Aorta (tissue), 5 donors: ENCODE measurements at regions of chr1 and their contacts with region 1.

Region 1: DNA sequence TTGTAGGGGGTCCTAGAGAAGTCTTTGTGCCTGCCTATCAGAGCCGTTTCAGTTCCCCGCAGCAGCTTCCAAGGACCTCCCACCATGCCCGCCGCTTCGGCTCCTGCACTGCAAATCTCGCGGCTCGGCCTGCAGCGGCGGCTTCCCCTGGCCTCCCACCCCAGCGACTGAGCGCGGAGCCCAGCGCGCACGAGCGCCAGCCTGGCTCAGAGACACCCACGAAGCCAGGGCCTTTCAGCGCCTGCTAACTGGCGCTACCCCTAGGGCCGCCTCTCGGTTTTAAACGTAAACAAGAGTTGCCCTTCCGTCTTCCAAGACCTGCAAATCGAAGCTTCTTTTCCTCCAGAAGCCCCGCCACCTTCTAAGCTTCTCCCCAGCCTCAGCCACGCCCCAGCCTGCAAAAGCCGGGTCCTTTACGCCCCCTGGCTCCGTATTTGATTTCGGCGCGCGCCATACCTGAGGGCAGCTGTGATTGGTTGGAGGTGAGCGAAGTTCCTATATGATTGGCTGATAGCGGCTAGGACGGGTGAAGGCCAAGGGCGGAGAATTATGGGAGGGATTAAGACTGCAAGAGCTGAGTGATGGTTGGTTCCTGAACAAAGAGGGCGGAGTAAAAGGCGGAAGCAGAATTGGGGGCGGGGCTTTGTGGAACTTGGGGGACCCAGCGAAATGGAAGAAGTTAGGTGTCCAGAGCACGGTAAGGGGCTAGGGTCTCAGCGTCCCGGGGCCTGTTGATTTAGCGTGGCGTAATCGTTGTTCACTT is at the start of gene TTF2:
- DNase-seq: peak; percentile 94 to 95
- ATAC-seq: peak; percentile 99
- H3K4me3 ChIP-seq: peak within 1 kb of the TSS; percentile 30 to 59
- H3K27ac ChIP-seq: peak within 1 kb of the TSS in 1 of 2 donors; percentile 37
- H3K4me1 ChIP-seq: no peaks in the 10 kb centered on the region
- H3K27me3 ChIP-seq: no peaks in the 10 kb centered on the region
- total RNA-seq, gene TTF2: 12.5 to 18.8 TPM

Region 2: GRCh38 chr1:116737020-116737854 is 322.6 kb before region 1 on chr1:
- intact Hi-C with region 1: loop called (anchors 1 to 5 kb)
- DNase-seq: peak in 1 of 2 donors; percentile 65
- ATAC-seq: peak; percentile 53
- H3K4me3 ChIP-seq: no peak overlapping the region
- H3K27ac ChIP-seq: no peak overlapping the region
- H3K4me1 ChIP-seq: no peaks in the 10 kb centered on the region
- H3K27me3 ChIP-seq: no peaks in the 10 kb centered on the region

Region 3: DNA sequence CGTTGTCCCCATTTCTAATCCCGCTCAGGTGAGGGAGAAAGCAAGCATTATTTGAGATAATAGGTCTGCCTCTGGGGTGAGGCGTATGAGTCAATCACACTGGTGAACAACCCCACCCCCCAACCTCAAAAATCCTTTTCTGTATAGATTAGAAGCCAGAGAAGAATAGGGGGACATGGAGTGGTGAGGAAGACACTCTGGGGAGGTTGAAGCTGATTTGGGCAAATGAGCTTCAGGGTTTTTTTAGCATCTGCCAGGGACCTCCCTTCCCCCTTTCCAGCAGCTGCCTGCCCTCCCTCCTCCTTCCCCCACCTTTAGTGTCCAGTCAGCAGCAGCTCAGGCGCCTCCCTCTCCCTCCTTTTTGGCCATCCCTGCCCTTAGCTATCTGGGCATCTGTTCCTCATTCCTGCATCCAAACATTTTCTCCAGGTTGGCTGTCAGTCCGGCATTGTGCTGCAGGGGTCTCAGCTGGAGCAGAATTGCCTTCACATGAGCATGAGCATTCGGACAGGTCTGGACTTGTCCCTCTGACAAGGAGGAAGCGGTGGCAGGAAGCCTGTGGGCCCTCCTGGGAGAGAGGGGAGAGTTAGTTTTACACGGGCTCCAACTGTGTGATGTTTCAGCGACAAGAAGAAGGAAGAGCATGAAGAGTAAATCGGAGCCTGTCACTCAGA is 180.9 kb before region 1 on chr1:
- intact Hi-C with region 1: loop called in 1 of 2 experiments (anchors 10 kb)
- DNase-seq: peak in 1 of 2 donors; percentile 62
- ATAC-seq: no peak
- H3K4me3 ChIP-seq: no peak overlapping the region
- H3K27ac ChIP-seq: no peak overlapping the region
- H3K4me1 ChIP-seq: no peaks in the 10 kb centered on the region
- H3K27me3 ChIP-seq: no peaks in the 10 kb centered on the region

Region 4: DNA sequence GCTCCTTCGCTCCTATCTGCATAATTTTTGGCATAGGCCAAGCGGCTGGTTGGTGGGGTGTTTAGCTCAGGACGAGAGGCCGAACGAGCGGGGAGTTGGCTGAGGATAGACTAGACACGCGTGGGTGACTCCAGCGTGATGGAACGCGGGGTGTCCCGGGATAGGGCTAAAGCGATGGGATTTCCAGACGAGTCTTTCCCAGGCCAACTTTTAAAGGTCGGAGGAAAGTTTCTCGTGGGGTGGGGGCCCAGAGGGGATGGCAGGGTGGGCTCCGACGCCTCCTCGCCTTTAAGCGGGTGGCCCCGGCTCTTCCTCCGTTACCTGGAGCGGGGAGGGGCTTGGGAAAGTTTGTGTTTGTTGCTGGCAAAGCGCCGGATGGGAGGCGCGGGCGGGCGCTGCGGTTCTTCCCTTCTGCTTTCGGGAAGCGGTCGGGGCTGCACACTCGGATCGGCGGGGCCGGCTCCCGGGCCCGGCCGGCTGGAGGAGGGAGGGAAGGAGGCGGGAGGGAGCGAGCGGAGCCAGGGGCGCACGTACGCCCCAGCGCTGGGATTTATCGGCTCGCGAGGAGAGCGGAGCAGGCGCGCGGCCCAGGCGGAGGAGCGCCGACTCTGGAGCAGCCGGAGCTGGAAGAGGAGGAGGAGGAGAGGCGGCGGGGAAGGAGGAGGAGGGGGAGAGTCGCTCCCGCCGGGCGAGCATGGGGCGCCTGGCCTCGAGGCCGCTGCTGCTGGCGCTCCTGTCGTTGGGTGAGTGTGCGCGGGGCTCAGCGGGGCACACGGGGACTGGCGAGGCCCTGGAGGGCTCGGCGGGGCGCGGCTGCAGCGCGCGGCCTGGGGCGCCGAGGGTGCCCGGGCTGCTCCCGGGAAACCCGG is 150.1 kb before region 1 on chr1 and contains the start of gene PTGFRN:
- intact Hi-C with region 1: loop called in 1 of 2 experiments (anchors 10 kb)
- DNase-seq: peak; percentile 83 to 91
- ATAC-seq: peak; percentile 84
- H3K4me3 ChIP-seq: peak within 1 kb of the TSS; percentile 73 to 79
- H3K27ac ChIP-seq: peak within 1 kb of the TSS in 1 of 2 donors; percentile 48
- H3K4me1 ChIP-seq: no peaks in the 10 kb centered on the region
- H3K27me3 ChIP-seq: no peaks in the 10 kb centered on the region
- total RNA-seq, gene PTGFRN: 31.9 to 75.0 TPM

Region 5: DNA sequence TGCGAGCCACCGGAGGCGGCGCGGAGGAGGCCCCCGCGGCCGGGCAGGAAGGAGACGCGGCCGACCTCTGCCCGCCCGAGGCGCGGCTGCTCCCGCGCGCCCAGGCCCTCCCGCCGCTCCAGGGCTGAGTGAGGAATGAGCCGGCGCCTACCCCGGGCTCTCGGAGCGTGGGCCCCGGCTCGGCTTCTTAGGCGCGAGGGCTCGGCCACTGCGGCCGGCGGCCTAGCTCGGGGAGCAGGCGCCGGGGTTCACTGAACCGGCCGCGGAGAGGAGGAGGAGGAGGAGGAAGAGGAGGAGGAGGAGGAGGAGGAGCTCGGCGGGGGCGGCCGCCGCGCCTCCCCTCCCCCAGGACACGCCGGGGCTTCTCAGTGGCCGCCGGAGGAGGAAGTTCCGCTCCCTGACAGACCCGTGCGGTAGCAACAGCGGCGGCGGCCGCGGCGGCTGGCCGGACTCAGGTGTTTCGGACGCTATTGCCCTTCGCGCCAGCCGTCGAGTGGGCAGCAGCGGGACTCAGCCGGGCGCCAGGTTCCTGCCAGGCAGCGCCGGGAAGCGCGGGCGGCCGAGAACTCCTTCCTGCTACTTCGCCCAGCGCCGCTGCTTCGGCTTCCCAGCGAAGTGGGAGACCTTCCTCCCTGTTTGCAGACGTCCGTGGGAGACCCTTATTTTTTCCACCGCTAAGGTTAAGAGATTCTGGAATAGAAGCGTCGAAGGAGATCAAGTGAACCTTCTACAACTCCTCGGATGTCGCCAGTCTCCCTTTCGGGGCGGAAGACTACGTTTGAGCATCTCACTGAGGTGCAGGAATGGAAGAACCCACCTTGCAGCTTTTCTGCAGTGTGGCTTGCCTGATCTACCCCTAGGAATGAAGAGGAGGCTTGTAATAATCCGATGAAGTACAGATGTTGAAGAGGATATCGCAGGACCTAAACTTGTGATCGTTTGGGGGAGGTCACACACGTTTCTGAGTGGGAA is 307.5 kb after region 1 on chr1 and contains the start of gene MAN1A2:
- intact Hi-C with region 1: loop called in 1 of 2 experiments (anchors 10 kb)
- DNase-seq: peak; percentile 92 to 94
- ATAC-seq: peak; percentile 93
- H3K4me3 ChIP-seq: peak within 1 kb of the TSS; percentile 75 to 84
- H3K27ac ChIP-seq: peak within 1 kb of the TSS; percentile 90 to 97
- H3K4me1 ChIP-seq: peaks cover 0 to 9% of the 10 kb centered on the region in 2 donors
- H3K27me3 ChIP-seq: no peaks in the 10 kb centered on the region
- total RNA-seq, gene MAN1A2: 47.7 to 50.4 TPM

Region 6: GRCh38 chr1:117605774-117606648 is 546.2 kb after region 1 on chr1 and contains the start of gene TENT5C:
- intact Hi-C with region 1: no loop called
- DNase-seq: peak; percentile 98 to 99
- ATAC-seq: peak; percentile 98
- H3K4me3 ChIP-seq: peak within 1 kb of the TSS; percentile 67 to 74
- H3K27ac ChIP-seq: peak within 1 kb of the TSS in 1 of 2 donors; percentile 83
- H3K4me1 ChIP-seq: no peaks in the 10 kb centered on the region
- H3K27me3 ChIP-seq: no peaks in the 10 kb centered on the region
- total RNA-seq, gene TENT5C: 6.8 to 17.7 TPM